ENCODE measurements at regions of chr12 and their contacts with region 1.

Region 1: GRCh38 chr12:53746592-53747092 is 5.1 kb downstream of the CISTR start:
- DNase-seq: peak; percentile 74 to 89
- H3K4me3 ChIP-seq: no peak overlapping the region
- H3K27ac ChIP-seq: no peak overlapping the region
- H3K4me1 ChIP-seq: no peaks in the 10 kb centered on the region
- H3K27me3 ChIP-seq: 0 out of 2 replicates have a peak, but pooled peaks cover 4% of the 10 kb centered on the region
- CTCF ChIP-seq: peak; percentile 99

Region 2: DNA sequence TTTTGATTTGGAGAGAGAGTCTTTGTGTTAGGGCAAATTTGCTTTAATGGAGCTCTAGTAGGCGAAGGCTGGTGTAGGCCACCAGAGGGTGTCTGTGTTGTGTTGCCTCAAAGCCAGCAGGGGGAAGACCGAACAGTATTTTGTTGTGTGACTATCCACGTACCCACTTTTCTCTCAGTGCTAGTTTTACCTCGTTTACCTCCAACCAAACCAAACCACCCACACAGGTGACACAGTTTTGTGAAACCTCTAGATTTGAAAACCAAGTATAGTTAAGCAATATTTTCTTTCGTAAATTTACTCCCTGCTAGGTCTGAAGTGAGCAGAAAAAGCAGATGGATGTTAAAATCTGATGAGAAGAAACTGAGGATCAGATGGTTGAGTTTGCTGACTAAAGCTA is 203.1 kb before region 1 on chr12:
- CTCF ChIA-PET with region 1: no interaction called
- POLR2A ChIA-PET with region 1: no interaction called
- intact Hi-C with region 1: loop called (anchors 1 kb)
- DNase-seq: peak in 1 of 2 experiments; percentile 19
- H3K4me3 ChIP-seq: no peak overlapping the region
- H3K27ac ChIP-seq: 0 out of 2 replicates have a peak overlapping the region, but pooled peaks have one; percentile 4
- H3K4me1 ChIP-seq: peaks cover 16% of the 10 kb centered on the region
- H3K27me3 ChIP-seq: no peaks in the 10 kb centered on the region
- CTCF ChIP-seq: peak; percentile 76

Region 3: DNA sequence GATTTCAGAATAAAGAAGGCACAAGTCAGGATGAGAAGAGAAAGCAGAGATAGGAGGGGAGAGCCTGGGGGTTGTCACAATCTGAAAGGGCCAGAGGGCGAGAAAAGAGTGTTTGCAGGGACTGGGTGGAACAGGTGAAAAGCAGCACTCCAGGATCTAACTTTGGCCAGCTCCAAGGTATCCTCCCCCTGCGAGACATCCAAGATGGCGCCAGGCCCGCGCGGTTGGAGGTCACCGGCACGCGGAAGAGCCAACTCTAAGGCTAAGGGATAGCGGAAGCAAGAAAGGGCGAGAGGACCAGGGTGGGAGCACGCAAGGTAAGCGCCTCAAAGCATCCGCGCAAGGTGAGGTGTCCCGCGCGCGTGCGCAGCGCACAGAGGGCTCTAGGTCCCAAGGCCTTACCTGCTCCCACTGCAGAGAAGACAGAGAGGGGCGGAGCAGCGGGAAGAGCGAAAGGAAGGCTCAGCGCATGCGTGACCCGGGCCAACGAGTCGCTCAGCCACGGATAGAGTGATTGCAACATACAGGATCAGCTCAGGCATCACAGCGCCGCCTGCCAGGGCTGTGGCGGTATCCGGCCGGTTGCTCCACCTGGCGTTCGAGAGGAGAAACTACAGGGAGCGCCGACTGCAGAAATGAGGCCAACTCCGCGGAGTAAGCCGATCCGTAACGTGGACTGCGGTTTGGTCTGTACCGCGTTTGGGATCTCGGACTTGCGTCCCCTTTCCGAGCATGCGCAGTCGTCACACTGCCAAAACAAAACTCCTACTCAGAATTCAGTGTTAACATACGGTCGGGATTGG is 70.8 kb before region 1 on chr12 and contains the start of gene ATP5MC2:
- CTCF ChIA-PET with region 1: interaction called, 13 read pairs
- POLR2A ChIA-PET with region 1: no interaction called
- intact Hi-C with region 1: no loop called
- DNase-seq: peak; percentile 93 to 97
- H3K4me3 ChIP-seq: peak within 1 kb of the TSS; percentile 86
- H3K27ac ChIP-seq: peak within 1 kb of the TSS; percentile 75
- H3K4me1 ChIP-seq: peaks cover 15% of the 10 kb centered on the region
- H3K27me3 ChIP-seq: no peaks in the 10 kb centered on the region
- CTCF ChIP-seq: peak; percentile 92
- total RNA-seq, gene ATP5MC2: 270 and 280 TPM in 2 replicates

Region 4: DNA sequence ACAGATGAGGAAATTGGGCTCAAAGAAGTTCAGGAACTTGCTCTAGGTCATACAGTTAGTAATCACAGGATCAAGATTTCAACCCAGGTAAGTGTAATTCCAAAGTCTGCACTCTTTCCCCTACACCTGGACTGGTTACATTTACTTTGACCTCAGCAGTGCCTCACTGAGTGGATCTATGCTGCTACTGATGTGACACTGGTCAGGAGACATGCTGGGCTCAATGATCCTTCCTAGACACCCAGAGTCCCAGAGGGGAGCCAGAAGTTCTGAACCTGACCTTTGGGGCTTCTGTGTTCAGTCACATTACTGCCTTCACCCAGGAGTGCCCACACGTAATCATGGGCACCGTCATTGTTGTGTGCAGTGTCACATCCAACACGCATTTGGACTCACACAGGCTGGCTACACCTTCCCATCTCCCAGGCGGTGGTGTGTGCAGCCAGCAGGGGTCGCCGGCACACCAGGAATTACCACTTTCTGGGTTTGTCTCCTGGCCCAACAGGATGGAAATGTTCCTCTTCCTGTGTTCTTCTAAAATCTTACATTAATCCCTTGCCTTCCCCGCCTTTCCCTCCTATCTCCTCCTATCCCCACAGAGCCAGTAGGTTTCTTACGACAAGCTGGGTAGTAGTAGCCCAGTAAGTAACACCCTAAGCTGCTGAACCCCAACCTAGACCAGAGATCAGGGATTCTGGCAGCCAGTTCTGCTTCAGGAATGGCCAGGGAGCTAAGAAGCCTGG is 45.0 kb before region 1 on chr12:
- CTCF ChIA-PET with region 1: interaction called, 18 read pairs
- POLR2A ChIA-PET with region 1: no interaction called
- intact Hi-C with region 1: loop called (anchors 1 kb)
- DNase-seq: peak in 1 of 2 experiments; percentile 79
- H3K4me3 ChIP-seq: no peak overlapping the region
- H3K27ac ChIP-seq: no peak overlapping the region
- H3K4me1 ChIP-seq: peaks cover 3% of the 10 kb centered on the region; the same call in 1 of the 2 replicates
- H3K27me3 ChIP-seq: peaks cover 22% of the 10 kb centered on the region
- CTCF ChIP-seq: peak; percentile 82

Region 5: GRCh38 chr12:53727310-53728041 is 19.2 kb before region 1 on chr12 and contains the start of gene CALCOCO1:
- CTCF ChIA-PET with region 1: interaction called, 11 read pairs
- POLR2A ChIA-PET with region 1: no interaction called
- intact Hi-C with region 1: no loop called
- DNase-seq: peak; percentile 94 to 96
- H3K4me3 ChIP-seq: peak within 1 kb of the TSS; percentile 72
- H3K27ac ChIP-seq: no peak within 1 kb of the TSS
- H3K4me1 ChIP-seq: peaks cover 18% of the 10 kb centered on the region
- H3K27me3 ChIP-seq: no peaks in the 10 kb centered on the region
- CTCF ChIP-seq: no peak
- total RNA-seq, gene CALCOCO1: 67.4 and 88.9 TPM in 2 replicates

Region 6: DNA sequence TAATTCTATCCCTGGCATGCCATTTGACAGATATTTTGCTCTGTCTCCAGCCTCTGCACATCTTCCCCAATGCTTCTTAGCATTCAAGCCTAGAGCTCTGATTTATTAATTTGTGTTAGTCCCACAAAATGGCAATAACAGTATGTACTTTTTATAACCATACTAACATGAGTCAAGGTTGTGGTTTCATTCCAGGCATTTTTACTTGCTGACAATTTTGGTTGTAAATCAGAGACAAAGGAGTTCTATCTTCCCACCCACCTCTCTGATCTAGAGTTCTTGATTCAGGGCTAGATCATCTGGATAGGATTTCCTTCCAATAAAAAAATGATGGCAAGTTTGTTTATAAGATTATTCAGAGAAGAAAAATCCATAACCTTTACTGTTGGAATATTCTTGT is 23.6 kb after region 1 on chr12:
- CTCF ChIA-PET with region 1: no interaction called
- POLR2A ChIA-PET with region 1: no interaction called
- intact Hi-C with region 1: no loop called
- DNase-seq: peak in 1 of 2 experiments; percentile 92
- H3K4me3 ChIP-seq: no peak overlapping the region
- H3K27ac ChIP-seq: peak overlapping the region; percentile 53
- H3K4me1 ChIP-seq: peaks cover 39% of the 10 kb centered on the region
- H3K27me3 ChIP-seq: no peaks in the 10 kb centered on the region
- CTCF ChIP-seq: no peak

Region 7: GRCh38 chr12:53806721-53807120 is 60.1 kb after region 1 on chr12:
- CTCF ChIA-PET with region 1: no interaction called
- POLR2A ChIA-PET with region 1: no interaction called
- intact Hi-C with region 1: no loop called
- DNase-seq: no peak
- H3K4me3 ChIP-seq: no peak overlapping the region
- H3K27ac ChIP-seq: peak overlapping the region; percentile 96
- H3K4me1 ChIP-seq: peaks cover 67% of the 10 kb centered on the region
- H3K27me3 ChIP-seq: no peaks in the 10 kb centered on the region
- CTCF ChIP-seq: no peak

Region 8: GRCh38 chr12:53952871-53953734 is 206.5 kb after region 1 on chr12:
- CTCF ChIA-PET with region 1: no interaction called
- POLR2A ChIA-PET with region 1: no interaction called
- intact Hi-C with region 1: loop called (anchors 2 kb)
- DNase-seq: peak; percentile 77 to 85
- H3K4me3 ChIP-seq: peak overlapping the region; percentile 54
- H3K27ac ChIP-seq: no peak overlapping the region
- H3K4me1 ChIP-seq: peaks cover 23% of the 10 kb centered on the region
- H3K27me3 ChIP-seq: no peaks in the 10 kb centered on the region
- CTCF ChIP-seq: no peak